ENCODE measurements at regions of chr20 and their contacts with region 1.

Region 1: GRCh38 chr20:47051936-47052526 is 157.4 kb downstream of the EYA2 start:
- DNase-seq: no peak
- ATAC-seq: peak; percentile 5

Region 2: DNA sequence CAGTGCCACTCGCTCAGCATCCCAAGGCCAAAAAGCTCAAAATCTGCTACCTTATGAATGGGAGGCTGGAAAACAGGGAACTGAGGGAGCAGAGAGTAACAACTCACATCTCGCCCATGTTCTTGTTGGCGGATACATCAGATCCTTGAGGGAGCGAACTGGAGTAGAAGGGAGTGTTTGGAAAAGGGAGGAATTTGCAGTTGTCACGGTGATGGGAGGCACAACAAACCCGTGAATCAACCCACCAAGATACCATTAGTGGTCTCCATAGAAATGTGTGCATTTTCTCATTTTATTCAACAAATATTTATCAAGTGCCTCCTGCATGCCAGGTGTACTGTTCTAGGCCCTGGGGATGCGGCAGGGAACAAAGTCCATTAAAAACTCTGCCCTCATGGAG is 54.8 kb after region 1 on chr20:
- intact Hi-C with region 1: loop called (anchors 2 kb)
- DNase-seq: no peak
- ATAC-seq: no peak